Posterior vena cava (tissue), 2 donors: ENCODE measurements at regions of chr17 and their contacts with region 1.

Region 1: GRCh38 chr17:62008294-62008693 is 56.8 kb downstream of the MED13 start:
- DNase-seq: no peak

Region 2: GRCh38 chr17:61490540-61491412 is 517.5 kb before region 1 on chr17:
- intact Hi-C with region 1: loop called in 1 of 2 experiments (anchors 5 kb)
- DNase-seq: peak; percentile 58

Region 3: GRCh38 chr17:61970019-61970418 is 38.3 kb before region 1 on chr17:
- intact Hi-C with region 1: no loop called
- DNase-seq: no peak

Region 4: GRCh38 chr17:61981323-61981722 is 27.0 kb before region 1 on chr17:
- intact Hi-C with region 1: no loop called
- DNase-seq: no peak